ENCODE measurements at regions of chr17 and their contacts with region 1.

Region 1: DNA sequence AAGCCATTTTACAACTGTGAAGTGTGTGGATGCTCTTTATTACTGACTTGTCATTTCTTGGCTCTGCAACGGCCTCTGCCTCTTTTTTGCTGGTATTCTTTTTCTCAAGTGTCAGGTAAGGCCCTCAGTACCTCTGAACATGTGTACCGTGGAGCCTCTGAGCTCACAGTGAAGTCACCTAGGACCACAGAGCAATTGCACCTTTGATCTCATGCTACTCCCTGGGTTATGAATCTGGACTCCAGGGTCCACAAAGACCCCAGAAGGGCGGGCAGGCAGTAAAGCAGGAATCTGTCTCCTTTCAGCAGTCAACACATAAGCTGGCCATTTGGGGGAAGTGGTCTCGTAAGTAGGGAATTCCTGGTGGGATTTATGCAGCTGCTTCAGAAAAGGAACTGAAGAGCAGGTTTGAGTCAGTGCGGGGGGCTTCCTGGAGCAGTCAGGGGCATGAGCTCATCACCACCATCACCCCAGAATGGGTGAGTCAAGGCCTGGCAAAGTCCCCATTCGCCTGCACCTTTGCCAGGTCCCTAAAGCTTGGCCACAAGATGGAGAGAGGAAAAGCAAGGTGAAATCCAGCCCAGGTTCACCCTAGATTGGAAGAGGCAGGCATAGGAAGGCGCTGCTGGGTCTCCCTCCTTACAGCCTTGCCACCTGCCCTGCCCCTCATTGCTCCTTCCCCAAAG is 33.0 kb downstream of the TBX4 start:
- DNase-seq: no peak
- H3K4me3 ChIP-seq: no peak overlapping the region
- H3K27ac ChIP-seq: no peak overlapping the region
- H3K4me1 ChIP-seq: no peaks in the 10 kb centered on the region
- H3K27me3 ChIP-seq: no peaks in the 10 kb centered on the region
- CTCF ChIP-seq: no peak

Region 2: DNA sequence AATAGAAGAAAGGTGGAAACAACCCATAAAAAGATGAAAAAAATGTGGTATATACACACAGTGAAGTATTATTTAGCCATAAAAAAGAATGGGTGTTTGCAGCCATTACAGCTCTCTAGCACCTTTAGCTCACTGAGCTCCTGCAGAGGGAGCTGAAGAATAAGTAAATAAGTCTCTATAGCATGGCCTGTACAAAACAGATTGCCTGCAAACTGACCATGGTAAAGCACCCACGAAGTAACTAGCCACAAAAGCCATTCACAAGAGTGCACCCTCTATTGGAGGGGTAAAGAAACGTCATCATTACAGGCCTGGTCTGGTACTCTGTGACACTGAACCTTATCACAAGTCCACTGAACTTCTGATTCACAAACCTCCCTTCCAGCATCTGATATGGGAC is 1169.6 kb before region 1 on chr17:
- CTCF ChIA-PET with region 1: no interaction called
- POLR2A ChIA-PET with region 1: no interaction called
- intact Hi-C with region 1: no loop called
- DNase-seq: no peak
- H3K4me3 ChIP-seq: no peak overlapping the region
- H3K27ac ChIP-seq: no peak overlapping the region
- H3K4me1 ChIP-seq: no peaks in the 10 kb centered on the region
- H3K27me3 ChIP-seq: no peaks in the 10 kb centered on the region
- CTCF ChIP-seq: no peak

Region 3: DNA sequence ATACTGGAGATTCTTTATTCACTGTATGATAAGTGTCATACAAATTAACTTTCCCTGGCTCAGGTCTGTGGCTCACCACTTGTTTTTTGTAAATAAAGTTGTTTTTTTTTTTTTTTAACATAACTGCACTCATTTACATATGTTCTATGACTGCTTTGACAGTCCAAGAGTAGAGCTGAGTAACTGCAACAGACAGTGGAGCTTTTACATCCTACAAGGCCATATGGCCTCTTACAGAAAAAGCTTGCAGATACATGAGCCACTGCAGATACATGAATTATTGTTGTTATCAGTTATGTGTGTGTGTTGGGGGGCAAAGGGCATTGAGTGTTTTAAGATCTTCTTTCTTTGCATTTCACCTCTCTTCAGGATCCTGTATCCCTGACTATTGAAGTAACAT is 495.9 kb before region 1 on chr17:
- CTCF ChIA-PET with region 1: interaction called, 14 read pairs
- POLR2A ChIA-PET with region 1: no interaction called
- intact Hi-C with region 1: no loop called
- DNase-seq: no peak
- H3K4me3 ChIP-seq: no peak overlapping the region
- H3K27ac ChIP-seq: no peak overlapping the region
- H3K4me1 ChIP-seq: no peaks in the 10 kb centered on the region
- H3K27me3 ChIP-seq: no peaks in the 10 kb centered on the region
- CTCF ChIP-seq: no peak

Region 4: DNA sequence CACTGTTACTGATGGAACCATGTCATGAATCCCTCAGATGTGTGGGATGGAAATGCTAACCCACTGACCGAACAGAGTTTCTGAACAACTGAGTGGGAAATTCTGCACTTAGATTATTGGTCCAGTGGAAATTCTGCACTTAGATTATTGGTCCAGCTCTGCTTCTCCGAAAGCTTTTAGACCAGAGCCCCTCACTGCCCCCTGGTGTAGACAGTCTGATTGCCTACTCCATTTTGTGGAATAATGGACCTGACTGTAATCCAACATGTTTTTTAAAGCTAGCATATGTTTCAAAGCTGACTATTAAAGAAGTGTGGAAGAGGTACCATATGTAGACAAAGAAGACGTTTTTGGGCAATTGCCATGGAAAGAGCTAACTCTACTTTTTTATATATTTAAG is 135.9 kb before region 1 on chr17:
- CTCF ChIA-PET with region 1: no interaction called
- POLR2A ChIA-PET with region 1: no interaction called
- intact Hi-C with region 1: no loop called
- DNase-seq: no peak
- H3K4me3 ChIP-seq: no peak overlapping the region
- H3K27ac ChIP-seq: no peak overlapping the region
- H3K4me1 ChIP-seq: no peaks in the 10 kb centered on the region
- H3K27me3 ChIP-seq: no peaks in the 10 kb centered on the region
- CTCF ChIP-seq: 0 out of 2 replicates have a peak, but pooled peaks have one; percentile 18

Region 5: GRCh38 chr17:61524313-61524712 is 39.1 kb after region 1 on chr17:
- CTCF ChIA-PET with region 1: interaction called, 3 read pairs
- POLR2A ChIA-PET with region 1: interaction called, 10 read pairs
- intact Hi-C with region 1: no loop called
- DNase-seq: no peak
- H3K4me3 ChIP-seq: no peak overlapping the region
- H3K27ac ChIP-seq: no peak overlapping the region
- H3K4me1 ChIP-seq: no peaks in the 10 kb centered on the region
- H3K27me3 ChIP-seq: no peaks in the 10 kb centered on the region
- CTCF ChIP-seq: no peak

Region 6: GRCh38 chr17:61689610-61690180 is 204.5 kb after region 1 on chr17:
- CTCF ChIA-PET with region 1: no interaction called
- POLR2A ChIA-PET with region 1: no interaction called
- intact Hi-C with region 1: no loop called
- DNase-seq: no peak
- H3K4me3 ChIP-seq: no peak overlapping the region
- H3K27ac ChIP-seq: no peak overlapping the region
- H3K4me1 ChIP-seq: no peaks in the 10 kb centered on the region
- H3K27me3 ChIP-seq: no peaks in the 10 kb centered on the region
- CTCF ChIP-seq: no peak

Measured in PC-9 (cell line).